Calu3 (cell line): ENCODE measurements at regions of chr3 and their contacts with region 1.

Region 1: GRCh38 chr3:128170805-128171516 is 17.7 kb downstream of the EEFSEC start:
- DNase-seq: peak; percentile 72
- H3K4me3 Mint-ChIP-seq: no peak overlapping the region
- H3K27ac Mint-ChIP-seq: no peak overlapping the region
- H3K4me1 Mint-ChIP-seq: no peaks in the 10 kb centered on the region
- H3K27me3 Mint-ChIP-seq: no peaks in the 10 kb centered on the region
- CTCF ChIP-seq: peak; percentile 41

Region 2: GRCh38 chr3:128322066-128323022 is 151.4 kb after region 1 on chr3:
- CTCF ChIA-PET with region 1: interaction called, 4 read pairs
- intact Hi-C with region 1: loop called (anchors 10 kb)
- DNase-seq: peak; percentile 61
- H3K4me3 Mint-ChIP-seq: no peak overlapping the region
- H3K27ac Mint-ChIP-seq: no peak overlapping the region
- H3K4me1 Mint-ChIP-seq: no peaks in the 10 kb centered on the region
- H3K27me3 Mint-ChIP-seq: no peaks in the 10 kb centered on the region
- CTCF ChIP-seq: peak; percentile 64

Region 3: GRCh38 chr3:128497387-128498126 is 326.6 kb after region 1 on chr3:
- CTCF ChIA-PET with region 1: no interaction called
- intact Hi-C with region 1: loop called (anchors 5 kb)
- DNase-seq: peak; percentile 90
- H3K4me3 Mint-ChIP-seq: peak overlapping the region; percentile 70
- H3K27ac Mint-ChIP-seq: no peak overlapping the region
- H3K4me1 Mint-ChIP-seq: peaks cover 13% of the 10 kb centered on the region
- H3K27me3 Mint-ChIP-seq: no peaks in the 10 kb centered on the region
- CTCF ChIP-seq: peak; percentile 98

Region 4: GRCh38 chr3:128549283-128550112 is 378.5 kb after region 1 on chr3:
- CTCF ChIA-PET with region 1: no interaction called
- intact Hi-C with region 1: no loop called
- DNase-seq: peak; percentile 83
- H3K4me3 Mint-ChIP-seq: peak overlapping the region; percentile 27
- H3K27ac Mint-ChIP-seq: peak overlapping the region; percentile 37
- H3K4me1 Mint-ChIP-seq: peaks cover 9% of the 10 kb centered on the region
- H3K27me3 Mint-ChIP-seq: peaks cover 8% of the 10 kb centered on the region
- CTCF ChIP-seq: no peak